Endothelial cell of umbilical vein (primary cell): ENCODE measurements at regions of chr5 and their contacts with region 1.

Region 1: DNA sequence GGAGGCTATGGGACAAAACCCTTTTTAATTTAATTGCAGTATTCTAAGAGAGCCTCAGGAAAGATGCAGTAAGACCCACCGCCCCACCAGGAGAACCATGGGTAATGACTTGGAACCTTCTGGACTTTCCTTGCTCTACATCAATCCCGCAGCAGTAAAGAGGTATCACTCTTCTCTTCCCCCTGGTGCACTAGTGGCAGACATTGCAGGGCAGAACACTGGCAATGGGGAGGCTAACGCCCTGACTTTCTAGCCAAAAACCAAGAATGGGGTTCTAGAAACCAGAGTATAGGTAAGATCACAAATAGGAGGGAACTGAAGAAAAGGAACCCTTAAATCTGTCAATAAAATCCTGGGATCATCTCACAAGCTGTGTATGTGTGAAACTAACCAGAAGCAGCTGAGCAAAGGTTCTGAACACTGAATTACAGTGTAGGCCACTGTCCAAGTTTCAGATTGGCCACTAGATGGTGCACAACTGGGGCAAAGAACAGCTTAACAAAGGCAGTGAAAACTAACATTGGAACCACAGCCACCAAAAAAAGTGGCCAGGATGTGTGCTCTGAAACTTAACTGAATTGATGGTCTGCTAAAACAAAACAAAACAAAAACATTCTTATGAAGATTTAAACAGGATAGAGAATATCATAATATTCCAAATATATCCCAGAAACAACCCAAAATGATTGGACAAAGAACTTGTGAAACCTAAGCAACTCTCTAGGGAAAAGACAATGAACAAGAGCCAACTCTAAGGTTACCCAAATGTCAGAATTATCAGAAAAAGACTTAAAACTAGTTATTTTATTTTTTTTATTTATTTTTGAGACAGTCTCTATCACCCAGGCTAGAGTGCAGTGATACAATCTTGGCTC is 6.6 kb upstream of the FAM151B start:
- DNase-seq: peak; percentile 59
- H3K4me3 ChIP-seq: no peak overlapping the region
- H3K27ac ChIP-seq: no peak overlapping the region
- H3K4me1 ChIP-seq: no peaks in the 10 kb centered on the region
- H3K27me3 ChIP-seq: no peaks in the 10 kb centered on the region
- CTCF ChIP-seq: peak; percentile 81 to 85
- POLR2A ChIP-seq: no peak

Region 2: GRCh38 chr5:80442742-80443141 is 38.5 kb before region 1 on chr5:
- CTCF ChIA-PET with region 1: interaction called, 11 read pairs
- POLR2A ChIA-PET with region 1: no interaction called
- dilution Hi-C with region 1: no loop called
- intact Hi-C with region 1: no loop called
- DNase-seq: no peak
- H3K4me3 ChIP-seq: no peak overlapping the region
- H3K27ac ChIP-seq: no peak overlapping the region
- H3K4me1 ChIP-seq: no peaks in the 10 kb centered on the region
- H3K27me3 ChIP-seq: no peaks in the 10 kb centered on the region
- CTCF ChIP-seq: no peak
- POLR2A ChIP-seq: no peak

Region 3: GRCh38 chr5:80453366-80453765 is 27.9 kb before region 1 on chr5:
- CTCF ChIA-PET with region 1: interaction called, 16 read pairs
- POLR2A ChIA-PET with region 1: no interaction called
- dilution Hi-C with region 1: no loop called
- intact Hi-C with region 1: no loop called
- DNase-seq: no peak
- H3K4me3 ChIP-seq: no peak overlapping the region
- H3K27ac ChIP-seq: no peak overlapping the region
- H3K4me1 ChIP-seq: no peaks in the 10 kb centered on the region
- H3K27me3 ChIP-seq: no peaks in the 10 kb centered on the region
- CTCF ChIP-seq: no peak
- POLR2A ChIP-seq: no peak

Region 4: DNA sequence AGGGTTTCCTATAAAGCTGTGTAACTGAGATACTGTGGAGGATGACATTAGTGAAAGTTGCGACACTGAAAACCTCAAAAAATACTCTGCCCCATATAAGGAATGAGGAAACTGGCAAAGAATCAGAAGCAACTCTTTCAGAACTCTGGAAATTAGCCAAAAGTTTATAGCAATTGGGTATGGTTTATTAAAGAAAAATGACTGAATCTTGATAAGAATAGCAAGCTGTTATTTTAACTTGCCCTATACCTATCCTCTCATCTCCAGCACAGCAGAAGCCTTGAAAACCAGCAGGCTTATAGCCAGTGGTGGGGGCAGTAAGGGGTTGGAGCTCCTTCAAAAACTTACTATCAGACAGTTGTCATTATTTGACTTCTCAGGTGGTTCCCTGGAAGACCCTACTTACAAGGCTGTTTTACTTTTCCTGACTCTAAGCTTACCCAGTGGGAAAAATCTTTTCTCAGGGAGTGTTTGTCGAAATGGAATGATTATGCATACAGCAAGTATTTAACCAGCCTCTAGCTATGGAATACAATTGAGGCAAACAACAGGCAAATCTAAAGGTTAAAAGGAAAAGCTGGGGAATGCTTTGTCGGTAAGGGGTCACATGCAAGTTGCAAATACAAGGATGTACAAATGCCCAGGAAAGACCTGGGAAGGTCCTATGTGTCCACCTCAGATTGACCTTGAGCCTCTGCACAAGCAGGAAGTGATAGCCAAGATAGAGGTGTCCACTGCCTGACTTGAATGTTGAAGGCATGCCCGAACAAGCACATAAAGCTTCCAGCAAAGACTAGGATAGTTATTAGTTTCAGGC is 14.4 kb before region 1 on chr5:
- CTCF ChIA-PET with region 1: interaction called, 35 read pairs
- POLR2A ChIA-PET with region 1: no interaction called
- dilution Hi-C with region 1: no loop called
- intact Hi-C with region 1: no loop called
- DNase-seq: peak; percentile 27
- H3K4me3 ChIP-seq: no peak overlapping the region
- H3K27ac ChIP-seq: no peak overlapping the region
- H3K4me1 ChIP-seq: no peaks in the 10 kb centered on the region
- H3K27me3 ChIP-seq: no peaks in the 10 kb centered on the region
- CTCF ChIP-seq: no peak
- POLR2A ChIP-seq: no peak

Region 5: DNA sequence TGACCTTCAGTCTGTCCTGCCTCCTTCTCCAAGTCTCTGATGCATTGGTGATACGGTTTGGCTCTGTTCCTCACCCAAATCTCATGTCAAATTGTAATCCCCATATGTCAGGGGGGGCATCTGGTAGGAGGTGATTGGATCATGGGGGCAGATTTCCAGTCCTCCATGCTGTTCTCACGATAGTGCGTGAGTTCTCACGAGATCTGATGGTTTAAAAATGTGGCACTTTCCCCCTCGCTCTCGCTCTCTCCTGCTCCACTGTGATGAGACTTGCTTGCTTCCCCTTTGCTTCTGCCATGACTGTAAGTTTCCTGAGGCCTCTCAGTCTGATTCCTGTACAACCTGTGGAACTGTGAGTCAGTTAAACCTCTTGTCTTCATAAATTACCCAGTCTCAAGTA is 103.5 kb after region 1 on chr5:
- CTCF ChIA-PET with region 1: no interaction called
- POLR2A ChIA-PET with region 1: no interaction called
- dilution Hi-C with region 1: no loop called
- intact Hi-C with region 1: no loop called
- DNase-seq: no peak
- H3K4me3 ChIP-seq: no peak overlapping the region
- H3K27ac ChIP-seq: no peak overlapping the region
- H3K4me1 ChIP-seq: no peaks in the 10 kb centered on the region
- H3K27me3 ChIP-seq: no peaks in the 10 kb centered on the region
- CTCF ChIP-seq: no peak
- POLR2A ChIP-seq: no peak

Region 6: GRCh38 chr5:81212211-81212751 is 731.0 kb after region 1 on chr5:
- CTCF ChIA-PET with region 1: no interaction called
- POLR2A ChIA-PET with region 1: no interaction called
- dilution Hi-C with region 1: no loop called
- intact Hi-C with region 1: no loop called
- DNase-seq: no peak
- H3K4me3 ChIP-seq: no peak overlapping the region
- H3K27ac ChIP-seq: no peak overlapping the region
- H3K4me1 ChIP-seq: no peaks in the 10 kb centered on the region
- H3K27me3 ChIP-seq: no peaks in the 10 kb centered on the region
- CTCF ChIP-seq: no peak
- POLR2A ChIP-seq: no peak